Body of pancreas (tissue), 4 donors: ENCODE measurements at regions of chr11 and their contacts with region 1.

Region 1: DNA sequence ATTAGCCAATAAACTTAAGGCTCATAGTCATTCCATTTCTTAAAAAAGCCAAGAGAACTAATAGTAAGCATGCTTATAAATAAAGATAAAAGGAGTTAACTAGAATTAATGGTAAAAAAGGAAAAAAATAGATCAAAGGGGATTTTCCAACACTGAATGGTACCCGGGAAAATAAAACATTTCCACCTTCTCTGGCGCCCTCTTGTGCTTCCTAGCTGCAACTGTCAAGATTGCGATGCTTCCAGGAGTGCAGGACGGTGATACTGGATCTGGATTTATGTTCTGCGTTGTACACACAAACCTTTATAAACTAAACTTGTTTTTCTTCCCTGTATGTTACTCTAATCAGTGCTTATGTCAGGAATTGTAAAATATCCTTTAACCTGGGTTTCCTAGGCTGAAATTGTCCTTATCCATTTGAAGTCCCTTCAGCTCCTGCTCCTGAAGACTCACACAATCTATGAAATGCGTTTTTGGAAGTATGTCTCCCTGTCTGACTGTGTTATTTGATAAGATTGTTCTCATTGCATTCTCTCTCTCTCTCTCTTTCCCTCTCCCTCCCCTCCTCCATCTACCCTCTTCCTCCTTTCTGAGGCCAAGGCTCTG is 9.6 kb upstream of the HTATIP2 start:
- DNase-seq: peak; percentile 28 to 52 (median 36)
- ATAC-seq: peak; percentile 69
- H3K4me3 ChIP-seq: no peak overlapping the region
- H3K27ac ChIP-seq: no peak overlapping the region
- H3K4me1 ChIP-seq: peaks cover 6% of the 10 kb centered on the region
- H3K27me3 ChIP-seq: no peaks in the 10 kb centered on the region
- CTCF ChIP-seq: peak; percentile 36 to 78 (median 67)
- POLR2A ChIP-seq: no peak

Region 2: DNA sequence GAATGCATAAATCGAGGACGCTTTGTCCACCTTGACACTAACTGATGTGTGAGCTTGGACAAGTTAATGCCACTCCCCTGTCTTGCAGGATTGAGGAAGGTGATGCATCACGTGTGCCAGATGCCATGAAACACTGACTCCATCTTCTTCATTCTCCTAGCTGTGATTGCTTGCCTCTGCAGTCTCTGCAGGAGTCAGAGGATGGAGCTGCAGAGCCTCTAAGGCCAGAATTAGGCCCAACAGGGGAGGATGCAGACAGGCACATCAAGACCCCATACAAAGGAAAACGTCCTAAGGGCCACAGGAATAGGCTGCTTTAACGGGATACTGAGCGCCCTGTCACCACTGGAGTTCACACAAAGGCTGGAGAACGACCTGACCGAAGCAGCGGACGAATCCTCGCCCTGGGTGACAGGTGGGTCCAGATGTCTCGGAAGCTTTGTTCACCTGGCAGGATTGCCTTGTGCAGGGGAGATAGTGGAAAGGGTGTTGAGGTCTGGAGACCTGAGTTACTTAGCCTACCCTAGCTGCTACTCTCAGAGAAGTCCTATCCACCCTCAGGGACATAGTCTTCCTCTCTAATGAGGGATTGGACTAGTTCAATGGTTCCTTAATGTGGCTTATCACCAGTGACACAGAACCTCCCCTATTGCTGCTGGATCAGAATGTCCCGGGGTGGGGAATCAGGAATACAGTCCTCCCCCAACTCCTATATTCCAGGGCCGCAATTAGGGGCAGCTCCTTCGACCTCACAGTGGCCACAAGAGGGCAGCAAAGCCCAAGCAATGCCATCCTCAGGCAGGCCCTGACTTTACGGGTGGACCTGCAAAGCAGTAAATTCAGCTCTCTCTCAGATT is 226.0 kb before region 1 on chr11:
- intact Hi-C with region 1: loop called (anchors 5 kb)
- DNase-seq: peak; percentile 75 to 84 (median 81)
- ATAC-seq: peak; percentile 78
- H3K4me3 ChIP-seq: no peak overlapping the region
- H3K27ac ChIP-seq: no peak overlapping the region
- H3K4me1 ChIP-seq: peaks cover 7% of the 10 kb centered on the region
- H3K27me3 ChIP-seq: no peaks in the 10 kb centered on the region
- CTCF ChIP-seq: peak; percentile 41 to 85 (median 83)
- POLR2A ChIP-seq: no peak

Region 3: GRCh38 chr11:20226933-20227332 is 127.0 kb before region 1 on chr11:
- intact Hi-C with region 1: loop called (anchors 5 kb)
- DNase-seq: no peak
- ATAC-seq: no peak
- H3K4me3 ChIP-seq: no peak overlapping the region
- H3K27ac ChIP-seq: no peak overlapping the region
- H3K4me1 ChIP-seq: no peaks in the 10 kb centered on the region
- H3K27me3 ChIP-seq: no peaks in the 10 kb centered on the region
- CTCF ChIP-seq: no peak
- POLR2A ChIP-seq: no peak

Region 4: GRCh38 chr11:20289732-20290131 is 64.2 kb before region 1 on chr11:
- intact Hi-C with region 1: no loop called
- DNase-seq: no peak
- ATAC-seq: no peak
- H3K4me3 ChIP-seq: no peak overlapping the region
- H3K27ac ChIP-seq: no peak overlapping the region
- H3K4me1 ChIP-seq: no peaks in the 10 kb centered on the region
- H3K27me3 ChIP-seq: no peaks in the 10 kb centered on the region
- CTCF ChIP-seq: no peak
- POLR2A ChIP-seq: no peak